Aorta (tissue), 5 donors: ENCODE measurements at regions of chr1 and their contacts with region 1.

Region 1: DNA sequence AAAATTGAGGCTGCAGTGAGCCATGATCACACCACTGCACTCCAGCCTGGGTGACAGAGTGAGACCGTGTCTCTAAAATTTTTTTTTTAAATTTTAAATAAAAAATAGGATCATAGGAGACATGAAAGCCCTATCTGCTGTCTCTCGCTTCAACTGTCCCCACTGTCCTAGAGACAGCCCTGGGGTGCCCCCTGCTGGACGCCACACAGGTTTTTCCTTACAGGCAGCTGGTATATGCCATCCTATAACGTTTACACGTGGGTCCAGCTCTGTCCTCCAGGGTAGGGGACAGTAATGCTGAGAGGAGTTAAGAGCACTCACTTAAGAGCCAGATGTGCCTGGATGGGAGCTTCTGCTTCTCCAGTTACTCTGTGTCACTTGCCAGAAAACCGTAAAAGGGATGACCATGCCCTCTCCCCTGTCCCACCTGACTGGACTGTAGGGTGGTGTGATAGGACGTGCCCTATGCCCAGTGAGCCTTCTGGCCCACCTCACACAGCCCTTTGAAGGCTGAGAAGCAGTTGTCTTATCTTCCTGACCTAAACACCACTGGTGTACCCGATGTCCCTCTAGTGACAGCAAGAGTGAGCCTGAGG is 8.5 kb downstream of the FBXO2 start:
- DNase-seq: peak; percentile 85 to 93
- ATAC-seq: peak; percentile 71
- H3K4me3 ChIP-seq: no peak overlapping the region
- H3K27ac ChIP-seq: no peak overlapping the region
- H3K4me1 ChIP-seq: no peaks in the 10 kb centered on the region
- H3K27me3 ChIP-seq: no peaks in the 10 kb centered on the region

Region 2: GRCh38 chr1:11037740-11038182 is 608.0 kb before region 1 on chr1:
- intact Hi-C with region 1: loop called (anchors 5 kb)
- DNase-seq: peak; percentile 90 to 95
- ATAC-seq: peak; percentile 94
- H3K4me3 ChIP-seq: no peak overlapping the region
- H3K27ac ChIP-seq: no peak overlapping the region
- H3K4me1 ChIP-seq: peaks cover 0 to 2% of the 10 kb centered on the region in 2 donors
- H3K27me3 ChIP-seq: no peaks in the 10 kb centered on the region

Region 3: GRCh38 chr1:11248155-11248554 is 397.6 kb before region 1 on chr1:
- intact Hi-C with region 1: loop called in 1 of 2 experiments (anchors 5 kb)
- DNase-seq: no peak
- ATAC-seq: no peak
- H3K4me3 ChIP-seq: no peak overlapping the region
- H3K27ac ChIP-seq: no peak overlapping the region
- H3K4me1 ChIP-seq: no peaks in the 10 kb centered on the region
- H3K27me3 ChIP-seq: no peaks in the 10 kb centered on the region

Region 4: GRCh38 chr1:11384170-11384554 is 261.6 kb before region 1 on chr1:
- intact Hi-C with region 1: no loop called
- DNase-seq: no peak
- ATAC-seq: no peak
- H3K4me3 ChIP-seq: no peak overlapping the region
- H3K27ac ChIP-seq: no peak overlapping the region
- H3K4me1 ChIP-seq: no peaks in the 10 kb centered on the region
- H3K27me3 ChIP-seq: no peaks in the 10 kb centered on the region

Region 5: DNA sequence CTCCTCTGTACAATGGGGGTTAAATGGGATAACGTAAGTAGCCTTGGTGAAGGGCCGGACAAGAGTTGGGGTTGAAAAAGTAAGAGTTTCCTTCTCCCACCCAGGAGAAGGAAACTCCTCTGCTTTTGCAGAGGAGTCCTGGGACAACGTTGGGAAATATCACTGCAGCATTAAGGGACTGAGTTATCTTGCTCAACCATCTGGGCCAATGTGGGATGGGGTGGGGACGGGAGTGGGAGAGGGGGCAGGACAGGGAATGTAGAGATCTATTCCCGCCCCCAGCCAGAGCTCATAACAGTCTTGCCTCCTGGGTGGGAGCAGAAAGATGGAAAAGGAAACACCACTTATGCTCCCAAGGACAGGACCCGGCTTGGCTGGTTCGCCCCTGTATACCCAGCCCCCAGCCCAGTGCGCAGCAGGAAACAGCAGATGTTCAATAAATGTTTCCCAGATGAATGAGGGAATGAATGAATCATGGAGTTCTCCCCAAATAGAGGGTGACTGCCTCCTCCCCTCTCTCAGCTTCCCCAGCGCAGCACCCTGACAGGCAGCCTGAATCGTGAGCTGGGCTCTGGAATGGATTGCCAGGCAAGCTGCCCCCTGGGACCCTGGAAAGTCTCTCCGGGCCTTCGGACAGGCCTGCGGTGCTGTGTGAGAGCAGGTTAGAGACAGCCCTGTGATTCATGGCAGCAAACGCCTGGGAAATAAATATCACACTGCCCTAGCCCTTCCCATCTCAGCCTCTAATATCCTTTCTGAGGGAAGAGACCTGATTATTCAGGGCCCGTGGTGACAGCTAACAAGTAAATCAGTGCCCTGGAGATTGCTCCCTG is 16.4 kb before region 1 on chr1:
- intact Hi-C with region 1: no loop called
- DNase-seq: no peak
- ATAC-seq: no peak
- H3K4me3 ChIP-seq: no peak overlapping the region
- H3K27ac ChIP-seq: no peak overlapping the region
- H3K4me1 ChIP-seq: no peaks in the 10 kb centered on the region
- H3K27me3 ChIP-seq: peaks cover 0 to 2% of the 10 kb centered on the region in 2 donors

Region 6: GRCh38 chr1:11719313-11720032 is 73.7 kb after region 1 on chr1:
- intact Hi-C with region 1: loop called in 1 of 2 experiments (anchors 5 kb)
- DNase-seq: peak; percentile 91 to 95
- ATAC-seq: peak; percentile 92
- H3K4me3 ChIP-seq: no peak overlapping the region
- H3K27ac ChIP-seq: no peak overlapping the region
- H3K4me1 ChIP-seq: no peaks in the 10 kb centered on the region
- H3K27me3 ChIP-seq: no peaks in the 10 kb centered on the region